ENCODE measurements at regions of chr12 and their contacts with region 1.

Region 1: GRCh38 chr12:52949413-52950331 is 754 bp downstream of the KRT18 start:
- H3K4me3 ChIP-seq: peak overlapping the region; percentile 65
- H3K27ac ChIP-seq: peak overlapping the region; percentile 82
- H3K4me1 ChIP-seq: peaks cover 7% of the 10 kb centered on the region; the same call in 1 of the 2 replicates
- CTCF ChIP-seq: peak; percentile 62; the same call in 1 of the 2 replicates

Region 2: DNA sequence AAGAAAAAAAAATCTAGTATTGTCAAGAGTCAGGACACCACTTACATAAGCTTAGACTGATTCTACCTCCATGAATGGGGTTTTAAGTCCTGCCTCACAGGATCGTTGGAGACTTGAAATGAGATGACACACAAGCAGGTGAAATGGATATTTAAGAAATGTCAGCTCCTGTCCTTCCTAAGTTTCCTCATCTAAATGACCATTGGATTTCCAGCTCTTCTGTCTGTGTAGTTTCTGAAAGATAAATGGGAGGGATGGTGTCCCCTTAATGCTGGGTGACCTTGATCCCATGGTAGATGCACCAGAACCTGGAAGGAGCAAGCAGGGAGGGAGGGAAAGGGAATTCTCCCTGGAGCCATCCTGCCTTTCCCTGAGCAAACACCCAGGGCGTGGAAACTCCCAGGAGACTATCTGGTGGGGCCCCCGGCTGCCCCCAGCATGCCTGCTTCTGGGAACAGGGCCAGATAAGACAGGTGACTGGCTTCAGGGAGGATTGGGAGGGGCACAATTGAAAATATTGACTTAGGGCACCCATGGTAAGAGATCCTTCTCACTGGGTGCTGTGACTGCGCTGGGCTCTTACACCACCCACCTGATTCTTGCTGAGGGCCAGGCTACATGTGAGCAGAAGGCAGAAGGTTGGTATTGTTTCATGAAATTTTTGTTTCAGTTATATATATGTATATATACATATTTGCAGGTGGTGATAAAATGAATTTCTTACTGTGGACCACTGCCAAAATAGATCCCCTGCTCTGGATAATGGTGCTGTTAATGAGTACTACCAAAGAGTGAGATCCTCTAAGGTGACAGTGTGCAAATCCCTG is 54.4 kb before region 1 on chr12:
- CTCF ChIA-PET with region 1: interaction called, 4 read pairs
- POLR2A ChIA-PET with region 1: interaction called, 10 read pairs
- H3K4me3 ChIP-seq: no peak overlapping the region
- H3K27ac ChIP-seq: peak overlapping the region; percentile 69
- H3K4me1 ChIP-seq: peaks cover 15% of the 10 kb centered on the region
- CTCF ChIP-seq: no peak

Region 3: GRCh38 chr12:52924764-52925716 is 24.6 kb before region 1 on chr12:
- CTCF ChIA-PET with region 1: interaction called, 6 read pairs
- POLR2A ChIA-PET with region 1: interaction called, 28 read pairs
- H3K4me3 ChIP-seq: no peak overlapping the region
- H3K27ac ChIP-seq: peak overlapping the region; percentile 28
- H3K4me1 ChIP-seq: peaks cover 17% of the 10 kb centered on the region
- CTCF ChIP-seq: no peak

Region 4: DNA sequence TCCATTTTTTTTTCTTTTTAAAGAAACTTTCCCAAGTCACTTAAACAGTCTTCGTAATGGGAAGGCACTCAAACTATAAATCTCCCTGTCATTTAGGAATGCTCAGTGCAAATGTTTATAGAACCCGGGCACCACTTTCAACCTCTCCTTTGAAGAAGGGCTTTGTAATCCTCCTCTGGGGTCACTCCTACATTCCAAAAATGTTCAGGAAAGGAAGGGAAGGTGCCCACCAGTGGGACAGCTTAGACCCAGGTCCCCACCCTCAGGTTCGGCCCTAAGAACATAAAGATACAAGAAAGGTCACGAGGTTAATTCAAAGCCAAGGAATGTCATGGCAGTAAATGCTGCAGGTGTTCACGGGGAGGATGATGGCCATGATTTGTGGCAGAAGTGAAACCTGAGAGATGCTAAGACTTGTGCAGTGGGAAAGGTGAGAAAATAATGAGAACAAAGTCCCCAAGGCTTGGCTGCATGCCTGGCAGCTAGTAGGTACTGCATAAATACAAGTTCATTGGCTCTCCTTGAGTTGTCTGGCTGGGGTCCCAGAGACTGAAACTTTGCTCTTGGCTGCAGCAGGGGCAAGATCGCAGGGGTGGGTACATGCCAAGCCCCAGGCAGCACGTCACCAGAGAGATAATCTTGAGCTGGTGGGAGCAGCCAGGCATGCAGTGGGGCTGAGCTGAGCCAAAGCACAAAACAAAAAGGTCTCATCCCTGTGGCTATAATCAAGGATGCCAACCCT is 20.3 kb after region 1 on chr12:
- CTCF ChIA-PET with region 1: interaction called, 6 read pairs
- POLR2A ChIA-PET with region 1: interaction called, 11 read pairs
- H3K4me3 ChIP-seq: no peak overlapping the region
- H3K27ac ChIP-seq: no peak overlapping the region
- H3K4me1 ChIP-seq: peaks cover 4% of the 10 kb centered on the region
- CTCF ChIP-seq: no peak

Region 5: DNA sequence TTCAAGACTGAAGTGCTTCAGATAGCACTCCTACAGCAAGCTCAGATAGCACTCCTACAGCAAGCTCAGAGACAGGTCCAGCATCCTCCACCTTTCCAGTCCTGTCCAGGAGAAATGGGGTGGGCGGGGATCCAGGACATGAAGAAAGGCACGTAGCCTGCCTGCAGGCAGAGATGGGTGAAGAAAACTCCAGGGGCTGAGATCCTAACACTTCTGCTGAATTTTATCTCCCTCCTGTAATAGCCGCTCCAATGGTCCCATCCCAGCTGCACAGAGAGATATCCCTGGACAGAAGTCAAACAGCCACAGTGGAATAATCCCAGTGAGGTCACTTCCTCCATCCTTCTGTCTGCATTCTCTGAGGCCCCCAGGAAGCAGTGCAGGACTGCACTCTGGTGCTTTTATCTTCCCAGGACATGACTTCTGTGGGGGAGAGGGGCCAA is 25.5 kb after region 1 on chr12:
- CTCF ChIA-PET with region 1: interaction called, 19 read pairs
- POLR2A ChIA-PET with region 1: interaction called, 11 read pairs
- H3K4me3 ChIP-seq: no peak overlapping the region
- H3K27ac ChIP-seq: no peak overlapping the region
- H3K4me1 ChIP-seq: peaks cover 1% of the 10 kb centered on the region
- CTCF ChIP-seq: no peak

Measured in HEK293 (cell line).